CD8-positive, alpha-beta T cell (primary cell): ENCODE measurements at regions of chr12 and their contacts with region 1.

Region 1: GRCh38 chr12:18045446-18045992 is 44.5 kb downstream of the RERGL start:
- DNase-seq: no peak
- ATAC-seq: no peak
- H3K4me3 ChIP-seq: no peak overlapping the region
- H3K4me3 Mint-ChIP-seq: no peak overlapping the region
- H3K27ac ChIP-seq: no peak overlapping the region
- H3K27ac Mint-ChIP-seq: no peak overlapping the region
- H3K4me1 ChIP-seq: no peaks in the 10 kb centered on the region
- H3K4me1 Mint-ChIP-seq: no peaks in the 10 kb centered on the region
- H3K27me3 ChIP-seq: no peaks in the 10 kb centered on the region
- H3K27me3 Mint-ChIP-seq: no peaks in the 10 kb centered on the region
- CTCF ChIP-seq: no peak

Region 2: DNA sequence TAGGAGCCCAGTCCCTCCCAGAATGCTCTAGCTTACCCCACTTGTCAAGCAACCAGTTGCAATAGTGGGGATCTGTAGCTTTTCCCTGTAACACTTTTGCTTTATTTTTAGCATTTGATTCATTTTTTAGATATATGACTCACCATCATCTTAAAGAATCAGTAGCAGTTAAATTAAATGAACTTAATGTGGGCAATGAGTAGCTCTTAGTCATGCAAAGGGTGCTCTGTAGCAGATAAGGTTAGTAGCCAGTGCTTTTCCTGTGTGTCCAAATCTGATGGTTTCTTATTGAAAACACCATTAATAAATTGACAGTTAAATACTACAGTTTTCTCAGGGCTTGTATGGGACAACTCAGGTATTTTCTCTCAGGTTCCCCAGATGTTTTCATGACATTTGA is 267.3 kb before region 1 on chr12:
- CTCF ChIA-PET with region 1: no interaction called
- POLR2A ChIA-PET with region 1: no interaction called
- intact Hi-C with region 1: no loop called
- DNase-seq: no peak
- ATAC-seq: no peak
- H3K4me3 ChIP-seq: no peak overlapping the region
- H3K4me3 Mint-ChIP-seq: no peak overlapping the region
- H3K27ac ChIP-seq: no peak overlapping the region
- H3K27ac Mint-ChIP-seq: no peak overlapping the region
- H3K4me1 ChIP-seq: no peaks in the 10 kb centered on the region
- H3K4me1 Mint-ChIP-seq: no peaks in the 10 kb centered on the region
- H3K27me3 ChIP-seq: no peaks in the 10 kb centered on the region
- H3K27me3 Mint-ChIP-seq: no peaks in the 10 kb centered on the region
- CTCF ChIP-seq: no peak

Region 3: DNA sequence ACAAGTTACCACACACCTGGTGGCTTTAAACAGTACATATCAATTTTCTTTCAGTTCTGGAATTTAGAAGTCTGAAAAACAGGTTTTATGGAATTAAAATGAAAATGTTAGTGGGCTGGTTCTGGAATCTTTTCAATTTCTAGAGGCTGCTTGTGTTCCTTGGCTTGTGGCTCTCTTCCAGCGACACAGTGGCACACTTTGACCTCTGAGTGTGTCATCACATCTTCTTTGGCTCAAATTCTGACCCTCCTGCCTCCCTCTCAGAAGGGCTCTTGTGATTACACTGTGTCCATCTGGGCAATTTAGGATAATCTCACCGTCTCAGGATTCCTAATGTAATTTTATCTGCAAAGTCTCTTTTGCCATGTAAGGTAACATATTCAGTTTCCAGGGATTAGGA is 522.3 kb after region 1 on chr12:
- CTCF ChIA-PET with region 1: no interaction called
- POLR2A ChIA-PET with region 1: no interaction called
- intact Hi-C with region 1: loop called in 1 of 2 experiments (anchors 5 kb)
- DNase-seq: no peak
- ATAC-seq: no peak
- H3K4me3 ChIP-seq: no peak overlapping the region
- H3K4me3 Mint-ChIP-seq: no peak overlapping the region
- H3K27ac ChIP-seq: no peak overlapping the region
- H3K27ac Mint-ChIP-seq: no peak overlapping the region
- H3K4me1 ChIP-seq: no peaks in the 10 kb centered on the region
- H3K4me1 Mint-ChIP-seq: no peaks in the 10 kb centered on the region
- H3K27me3 ChIP-seq: no peaks in the 10 kb centered on the region
- H3K27me3 Mint-ChIP-seq: no peaks in the 10 kb centered on the region
- CTCF ChIP-seq: no peak